HepG2 (cell line): ENCODE measurements at regions of chr3 and their contacts with region 1.

Region 1: DNA sequence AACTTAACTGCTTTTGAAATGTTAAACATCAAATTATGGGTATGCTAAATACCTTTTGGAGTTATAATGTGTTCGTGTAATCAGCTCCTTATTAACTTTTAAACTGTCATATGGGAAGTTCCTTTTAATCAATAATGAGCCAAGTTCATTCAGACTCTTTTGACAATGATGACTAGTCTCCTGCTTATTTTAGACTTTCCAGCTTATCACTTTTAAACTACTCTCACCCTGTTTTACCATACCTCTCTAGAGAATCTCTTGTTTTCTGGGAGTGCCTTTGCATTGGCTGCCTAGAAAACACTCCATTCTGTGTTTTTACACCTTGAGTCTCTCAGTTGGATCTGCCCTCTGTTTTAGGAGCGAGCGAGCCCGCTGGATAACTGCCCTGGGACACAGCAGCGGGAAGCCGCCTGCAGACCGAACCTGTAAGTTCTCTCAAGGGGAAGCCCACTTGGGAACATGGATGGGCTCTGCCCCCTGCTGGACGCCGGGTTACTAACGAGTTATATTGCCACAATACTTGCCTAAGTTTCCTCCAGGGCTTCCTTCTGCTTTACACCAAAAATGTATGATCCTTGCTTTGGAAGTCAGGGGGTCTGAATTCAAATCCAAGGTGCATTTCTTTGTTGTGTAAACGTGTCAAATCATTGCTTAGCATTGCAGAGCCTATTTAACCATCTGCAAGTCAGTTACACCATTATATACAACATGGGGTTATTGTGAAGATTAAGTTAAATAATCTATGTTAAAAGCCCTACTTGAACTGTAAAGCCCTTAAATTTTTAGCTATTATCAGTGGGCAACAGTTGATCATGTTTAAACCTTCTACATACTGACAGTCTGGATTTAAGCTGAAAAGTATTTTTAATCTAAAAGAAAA is 71.3 kb downstream of the DHX36 start:
- DNase-seq: peak; percentile 84
- ATAC-seq: peak; percentile 83
- H3K4me3 ChIP-seq: no peak overlapping the region
- H3K27ac ChIP-seq: no peak overlapping the region
- H3K4me1 ChIP-seq: peaks cover 41% of the 10 kb centered on the region
- H3K27me3 ChIP-seq: no peaks in the 10 kb centered on the region
- CTCF ChIP-seq: peak; percentile 95
- EP300 ChIP-seq: no peak
- POLR2A ChIP-seq: no peak
- RAD21 ChIP-seq: peak; percentile 95

Region 2: GRCh38 chr3:154023148-154023547 is 229.9 kb before region 1 on chr3:
- CTCF ChIA-PET with region 1: interaction called, 6 read pairs
- POLR2A ChIA-PET with region 1: no interaction called
- in situ Hi-C with region 1: no loop called
- intact Hi-C with region 1: loop called (anchors 5 kb)
- DNase-seq: peak; percentile 85
- ATAC-seq: peak; percentile 96
- H3K4me3 ChIP-seq: peak overlapping the region in 1 of 3 experiments; percentile 0; a peak in 1 of 6 replicates
- H3K27ac ChIP-seq: no peak overlapping the region
- H3K4me1 ChIP-seq: peaks cover 18% of the 10 kb centered on the region
- H3K27me3 ChIP-seq: no peaks in the 10 kb centered on the region; a peak in 1 of 5 replicates
- CTCF ChIP-seq: no peak
- EP300 ChIP-seq: peak in 1 of 2 experiments; percentile 46; a peak in 1 of 4 replicates
- POLR2A ChIP-seq: no peak
- RAD21 ChIP-seq: no peak

Region 3: GRCh38 chr3:154040286-154040685 is 212.7 kb before region 1 on chr3:
- CTCF ChIA-PET with region 1: interaction called, 30 read pairs
- POLR2A ChIA-PET with region 1: no interaction called
- in situ Hi-C with region 1: loop called (anchors 5 kb)
- intact Hi-C with region 1: loop called (anchors 1 kb)
- DNase-seq: peak; percentile 23
- ATAC-seq: peak; percentile 87
- H3K4me3 ChIP-seq: no peak overlapping the region
- H3K27ac ChIP-seq: no peak overlapping the region
- H3K4me1 ChIP-seq: no peaks in the 10 kb centered on the region
- H3K27me3 ChIP-seq: no peaks in the 10 kb centered on the region; a peak in 1 of 5 replicates
- CTCF ChIP-seq: peak; percentile 49
- EP300 ChIP-seq: no peak
- POLR2A ChIP-seq: no peak
- RAD21 ChIP-seq: peak; percentile 42; the same call in 1 of the 2 replicates

Region 4: DNA sequence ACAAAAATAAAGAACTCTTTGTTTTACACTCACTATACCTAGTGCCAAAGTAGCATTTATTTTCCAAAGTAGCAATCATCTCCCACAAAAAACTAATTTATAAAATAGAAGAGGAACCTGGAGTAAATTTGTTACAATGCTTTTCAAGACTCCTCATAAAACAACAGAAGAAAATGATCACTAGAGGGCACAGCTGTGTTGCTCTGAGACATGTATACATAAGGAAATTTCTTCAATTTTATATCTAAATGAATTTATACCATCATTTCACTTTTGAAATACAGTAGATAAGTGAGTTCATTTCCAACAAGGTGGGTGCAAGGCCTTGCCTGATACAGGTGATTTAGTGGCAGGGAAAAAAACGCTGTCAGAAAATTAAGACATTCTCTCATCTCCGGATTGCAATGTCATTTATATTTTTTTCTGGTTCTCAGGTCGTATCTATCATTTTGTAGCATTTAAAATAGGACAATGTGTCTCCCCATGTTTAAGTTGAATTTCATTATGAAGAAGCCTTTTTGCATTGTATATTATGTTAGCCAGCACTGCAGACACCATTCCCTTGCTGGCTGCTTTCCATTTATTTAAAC is 157.1 kb before region 1 on chr3:
- CTCF ChIA-PET with region 1: interaction called, 38 read pairs
- POLR2A ChIA-PET with region 1: no interaction called
- in situ Hi-C with region 1: loop called (anchors 5 kb)
- intact Hi-C with region 1: loop called (anchors 1 kb)
- DNase-seq: peak; percentile 12
- ATAC-seq: peak; percentile 42; the same call in 2 of the 3 replicates
- H3K4me3 ChIP-seq: no peak overlapping the region
- H3K27ac ChIP-seq: no peak overlapping the region
- H3K4me1 ChIP-seq: peaks cover 8% of the 10 kb centered on the region
- H3K27me3 ChIP-seq: no peaks in the 10 kb centered on the region; a peak in 1 of 5 replicates
- CTCF ChIP-seq: peak; percentile 47
- EP300 ChIP-seq: no peak
- POLR2A ChIP-seq: no peak
- RAD21 ChIP-seq: peak; percentile 12; the same call in 1 of the 2 replicates

Region 5: DNA sequence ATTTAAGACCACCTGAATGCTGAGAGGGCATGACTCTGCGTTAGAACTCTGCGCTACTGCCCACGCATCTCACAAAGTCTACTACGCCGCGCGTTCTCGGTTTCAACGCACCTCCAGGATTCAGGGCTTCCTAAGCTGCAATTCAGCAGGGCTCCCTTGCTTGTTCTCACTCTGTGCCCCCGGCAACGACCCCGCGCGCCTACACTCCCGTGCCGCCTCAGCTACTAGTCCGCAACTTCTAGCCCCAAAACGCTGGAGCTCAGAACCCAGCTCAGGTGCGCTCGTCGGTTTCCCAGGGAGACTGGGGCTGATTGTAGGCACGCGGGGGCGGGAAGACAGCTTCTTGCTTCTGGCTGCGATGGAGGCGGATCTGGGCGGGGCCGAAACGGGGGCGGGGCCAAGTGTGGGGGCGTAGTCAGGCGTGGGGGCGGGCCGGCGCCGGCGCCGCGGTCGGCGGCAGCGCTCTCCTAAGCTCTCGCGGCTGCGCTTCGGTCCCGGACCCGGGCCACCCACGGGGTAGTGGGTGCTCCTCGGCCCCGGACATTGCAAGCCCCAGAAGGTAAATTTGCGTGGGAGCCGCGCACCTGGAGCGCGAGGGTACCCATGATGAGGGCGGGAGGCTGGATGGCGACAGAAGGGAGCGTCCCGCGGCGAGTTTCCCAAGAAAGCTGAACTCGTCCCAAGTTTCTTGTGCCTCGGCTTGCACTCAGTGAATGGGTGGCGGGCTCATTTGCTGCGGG is 131.9 kb before region 1 on chr3 and contains the start of gene ARHGEF26:
- CTCF ChIA-PET with region 1: no interaction called
- POLR2A ChIA-PET with region 1: interaction called, 5 read pairs
- in situ Hi-C with region 1: loop called (anchors 10 kb)
- intact Hi-C with region 1: loop called (anchors 10 kb)
- DNase-seq: peak; percentile 44
- ATAC-seq: peak; percentile 78
- H3K4me3 ChIP-seq: peak within 1 kb of the TSS; percentile 62 to 79 (median 66)
- H3K27ac ChIP-seq: no peak within 1 kb of the TSS
- H3K4me1 ChIP-seq: peaks cover 48% of the 10 kb centered on the region
- H3K27me3 ChIP-seq: peaks cover 0 to 32% of the 10 kb centered on the region in 2 experiments; a peak in 3 of 5 replicates
- CTCF ChIP-seq: 0 out of 2 replicates have a peak, but pooled peaks have one; percentile 4
- EP300 ChIP-seq: no peak
- POLR2A ChIP-seq: peak in 1 of 2 experiments; percentile 41; a peak in 2 of 4 replicates
- RAD21 ChIP-seq: no peak
- total RNA-seq, gene ARHGEF26: 6.1 and 6.3 TPM in 2 replicates

Region 6: DNA sequence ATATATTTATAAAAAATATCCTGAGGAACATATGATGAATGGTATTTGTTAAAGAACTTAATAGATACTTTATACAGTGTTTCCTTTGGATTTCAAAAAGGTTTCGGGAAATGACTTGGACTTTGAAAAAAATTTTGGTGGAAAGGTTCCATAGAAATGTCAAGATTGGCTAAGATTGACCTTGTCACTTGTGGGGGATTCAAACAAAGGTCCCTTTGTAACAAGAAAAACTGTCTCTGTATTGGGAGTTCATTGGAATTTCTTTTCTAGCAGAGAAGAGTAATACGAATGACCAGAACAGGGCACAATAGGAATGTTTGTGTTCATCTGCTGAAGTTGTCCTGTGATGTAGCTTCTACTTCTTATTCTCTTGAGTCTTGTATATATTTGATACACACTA is 88.6 kb before region 1 on chr3:
- CTCF ChIA-PET with region 1: no interaction called
- POLR2A ChIA-PET with region 1: no interaction called
- in situ Hi-C with region 1: no loop called
- intact Hi-C with region 1: loop called (anchors 1 kb)
- DNase-seq: peak; percentile 89
- ATAC-seq: peak; percentile 97
- H3K4me3 ChIP-seq: no peak overlapping the region; a peak in 1 of 6 replicates
- H3K27ac ChIP-seq: peak overlapping the region; percentile 57
- H3K4me1 ChIP-seq: peaks cover 54% of the 10 kb centered on the region
- H3K27me3 ChIP-seq: no peaks in the 10 kb centered on the region
- CTCF ChIP-seq: no peak
- EP300 ChIP-seq: peak in 1 of 2 experiments; percentile 72; a peak in 2 of 4 replicates
- POLR2A ChIP-seq: no peak
- RAD21 ChIP-seq: no peak